Colonic mucosa (tissue), 4 donors: ENCODE measurements at regions of chr9 and their contacts with region 1.

Region 1: DNA sequence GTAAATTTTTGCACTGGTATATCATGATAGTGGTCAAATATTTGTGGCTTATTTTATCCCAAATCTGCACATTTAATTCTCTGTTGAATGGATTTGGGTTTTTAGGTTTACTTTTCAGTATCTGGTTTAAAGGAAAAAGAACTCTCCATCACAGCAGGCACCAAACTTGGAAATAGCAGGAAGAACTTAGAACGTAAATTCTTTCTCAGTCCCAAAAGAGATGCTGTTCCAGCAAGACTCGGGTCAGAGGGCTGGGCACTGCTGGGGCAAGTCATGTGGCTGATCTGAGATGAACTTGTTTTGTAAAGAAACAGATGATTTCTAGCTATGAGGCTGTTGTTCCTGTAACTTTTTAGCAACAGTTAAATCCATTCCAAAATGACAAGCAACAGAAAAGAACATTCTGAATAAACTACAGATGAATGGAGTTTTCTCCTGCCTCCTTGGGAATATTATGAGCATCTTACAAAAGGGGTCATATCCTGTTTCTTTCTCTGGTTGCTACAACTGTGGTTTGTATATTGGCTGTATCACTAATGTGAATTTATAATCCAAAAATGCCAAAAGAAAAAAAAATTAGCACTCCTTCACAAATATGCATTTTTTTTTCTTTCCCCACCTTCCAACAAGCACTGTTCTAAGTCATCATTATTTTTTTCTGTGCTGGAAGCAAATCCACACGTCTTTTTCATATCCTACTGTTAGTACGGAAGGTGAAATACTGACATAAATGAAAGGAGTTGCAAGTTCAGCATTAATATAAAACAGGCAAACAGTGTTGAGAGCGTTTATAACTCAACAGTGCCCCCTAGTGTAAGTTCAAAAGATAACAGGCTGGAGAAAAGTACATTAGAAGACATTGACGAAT is 31.1 kb downstream of the OR2K2 start:
- DNase-seq: no peak
- H3K4me3 ChIP-seq: no peak overlapping the region
- H3K27ac ChIP-seq: no peak overlapping the region
- H3K4me1 ChIP-seq: no peaks in the 10 kb centered on the region
- H3K27me3 ChIP-seq: no peaks in the 10 kb centered on the region
- CTCF ChIP-seq: peak; percentile 72

Region 2: DNA sequence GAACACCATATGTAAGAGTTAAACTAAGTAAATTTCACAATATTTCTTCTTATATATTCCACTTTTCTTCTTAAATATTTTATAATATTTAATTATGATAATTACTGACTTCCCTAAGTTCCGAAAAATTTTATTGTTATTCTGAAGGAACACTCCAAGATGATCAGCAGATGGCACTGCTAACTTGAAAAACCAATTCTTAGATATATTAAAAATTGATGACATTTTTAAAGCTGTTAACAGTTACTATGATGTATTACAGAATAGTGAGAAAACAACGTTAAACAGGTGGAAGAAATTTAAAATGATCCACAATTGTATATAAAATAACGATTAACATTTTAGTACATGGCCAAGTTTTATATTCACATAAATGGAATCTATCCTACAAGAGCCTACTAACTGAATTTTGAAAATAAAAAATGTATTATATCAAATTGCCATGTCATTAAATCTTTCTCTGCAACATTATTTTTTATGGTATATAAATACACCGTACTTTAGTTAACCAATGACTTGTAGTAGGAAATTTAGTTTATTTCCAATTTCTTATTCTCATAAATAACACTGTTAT is 660.5 kb before region 1 on chr9:
- intact Hi-C with region 1: loop called (anchors 5 kb)
- DNase-seq: no peak
- H3K4me3 ChIP-seq: no peak overlapping the region
- H3K27ac ChIP-seq: no peak overlapping the region
- H3K4me1 ChIP-seq: no peaks in the 10 kb centered on the region
- H3K27me3 ChIP-seq: no peaks in the 10 kb centered on the region
- CTCF ChIP-seq: peak; percentile 22